B cell (primary cell): ENCODE measurements at regions of chr22 and their contacts with region 1.

Region 1: DNA sequence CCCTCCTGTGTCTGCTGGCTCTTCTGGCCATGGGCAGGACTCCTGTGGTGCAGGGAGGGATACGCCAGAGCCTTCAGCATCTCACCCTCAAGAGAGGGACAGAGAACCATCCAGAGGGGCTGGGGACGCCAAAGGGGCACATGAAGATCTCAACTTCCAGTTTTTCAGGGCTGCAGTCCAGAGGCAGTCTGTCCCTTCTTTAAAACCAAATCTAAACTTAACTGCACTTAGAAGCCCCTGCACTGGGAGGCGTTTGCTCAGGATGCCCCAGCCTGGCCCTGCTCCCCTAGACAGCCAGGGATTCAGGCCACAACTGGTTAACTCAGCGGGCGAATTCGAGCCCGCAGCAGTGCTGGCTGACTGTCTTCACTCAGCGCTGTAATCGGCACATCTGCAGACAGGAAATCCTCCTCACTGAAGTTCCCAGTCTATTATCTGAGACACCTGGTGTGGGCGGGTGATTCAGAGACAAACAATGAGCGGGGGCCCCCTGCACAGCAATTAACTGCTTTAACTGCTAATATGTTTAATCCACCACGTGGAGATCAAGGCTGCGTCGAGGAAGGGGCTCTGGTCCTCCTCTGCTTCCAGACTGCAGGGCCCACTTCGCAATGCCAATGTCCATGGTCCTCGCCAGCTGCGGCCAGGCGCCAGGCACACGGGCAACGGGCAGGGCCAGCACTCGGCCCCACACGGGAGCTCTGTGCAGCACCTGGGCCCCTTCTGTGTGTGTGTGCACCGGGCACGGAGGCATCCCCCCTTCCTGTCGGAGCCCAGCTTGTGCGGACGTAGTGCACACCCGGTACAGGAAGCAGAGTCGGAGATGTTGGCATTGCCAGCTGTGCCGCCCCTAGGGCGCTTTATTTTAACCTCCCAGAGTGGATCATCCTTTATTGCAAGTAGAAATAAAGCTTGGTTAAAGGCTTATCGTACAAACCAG is 36.9 kb upstream of the GNB1L start:
- DNase-seq: peak; percentile 58
- ATAC-seq: peak; percentile 74
- H3K4me3 ChIP-seq: peak overlapping the region in 4 of 5 experiments; percentile 33 to 58 (median 40)
- H3K4me3 Mint-ChIP-seq: peak overlapping the region; percentile 82
- H3K27ac ChIP-seq: peak overlapping the region; percentile 28 to 35
- H3K27ac Mint-ChIP-seq: peak overlapping the region; percentile 87
- H3K4me1 ChIP-seq: peaks cover 27 to 30% of the 10 kb centered on the region in 2 donors
- H3K4me1 Mint-ChIP-seq: peaks cover 28% of the 10 kb centered on the region
- H3K27me3 ChIP-seq: no peaks in the 10 kb centered on the region
- H3K27me3 Mint-ChIP-seq: no peaks in the 10 kb centered on the region
- CTCF ChIP-seq: no peak

Region 2: GRCh38 chr22:19832476-19833108 is 59.0 kb before region 1 on chr22:
- CTCF ChIA-PET with region 1: no interaction called
- POLR2A ChIA-PET with region 1: no interaction called
- intact Hi-C with region 1: loop called (anchors 10 kb)
- DNase-seq: no peak
- ATAC-seq: peak; percentile 33
- H3K4me3 ChIP-seq: no peak overlapping the region
- H3K4me3 Mint-ChIP-seq: no peak overlapping the region
- H3K27ac ChIP-seq: no peak overlapping the region
- H3K27ac Mint-ChIP-seq: no peak overlapping the region
- H3K4me1 ChIP-seq: peaks cover 0 to 5% of the 10 kb centered on the region in 2 donors
- H3K4me1 Mint-ChIP-seq: peaks cover 10% of the 10 kb centered on the region
- H3K27me3 ChIP-seq: no peaks in the 10 kb centered on the region
- H3K27me3 Mint-ChIP-seq: no peaks in the 10 kb centered on the region
- CTCF ChIP-seq: no peak

Region 3: DNA sequence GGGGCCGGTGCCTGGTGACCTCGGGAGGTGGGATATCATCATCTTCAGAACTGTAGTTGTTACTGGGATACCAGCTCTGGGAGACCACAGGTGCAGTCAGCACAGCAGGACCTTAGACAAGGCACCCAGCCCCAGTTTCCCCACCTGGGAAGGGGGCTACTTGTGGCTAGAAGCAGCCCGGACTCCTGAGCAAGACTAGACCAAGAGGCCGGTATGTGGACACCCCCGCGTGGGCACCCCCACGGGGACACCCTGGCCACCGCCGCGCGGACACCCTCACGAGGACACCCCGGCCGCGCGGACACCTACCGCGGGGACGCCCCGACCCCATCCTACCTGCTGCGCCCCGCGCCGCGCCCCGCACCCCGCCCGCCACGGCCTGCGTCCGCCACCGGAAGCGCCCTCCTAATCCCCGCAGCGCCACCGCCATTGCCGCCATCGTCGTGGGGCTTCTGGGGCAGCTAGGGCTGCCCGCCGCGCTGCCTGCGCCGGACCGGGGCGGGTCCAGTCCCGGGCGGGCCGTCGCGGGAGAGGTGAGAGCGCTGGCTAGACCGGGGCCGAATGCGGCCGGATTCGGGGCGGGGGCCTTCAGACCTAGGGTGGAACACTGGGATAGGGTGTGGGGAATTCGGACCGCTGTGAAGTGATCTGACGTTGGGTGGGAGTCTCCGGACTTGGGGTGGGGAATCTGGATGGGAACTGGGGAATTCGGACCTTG is 49.9 kb after region 1 on chr22 and contains the starts of genes COMT and TXNRD2:
- CTCF ChIA-PET with region 1: no interaction called
- POLR2A ChIA-PET with region 1: no interaction called
- intact Hi-C with region 1: loop called (anchors 5 kb)
- DNase-seq: peak; percentile 72
- ATAC-seq: peak; percentile 92
- H3K4me3 ChIP-seq: peak within 1 kb of the TSS; percentile 76 to 99 (median 83)
- H3K4me3 Mint-ChIP-seq: peak within 1 kb of the TSS; percentile 94
- H3K27ac ChIP-seq: peak within 1 kb of the TSS; percentile 62 to 85
- H3K27ac Mint-ChIP-seq: peak within 1 kb of the TSS; percentile 91
- H3K4me1 ChIP-seq: peaks cover 24 to 34% of the 10 kb centered on the region in 2 donors
- H3K4me1 Mint-ChIP-seq: peaks cover 40% of the 10 kb centered on the region
- H3K27me3 ChIP-seq: no peaks in the 10 kb centered on the region
- H3K27me3 Mint-ChIP-seq: no peaks in the 10 kb centered on the region
- CTCF ChIP-seq: no peak
- total RNA-seq, gene COMT: 32.6 and 36.1 TPM in 2 replicates
- total RNA-seq, gene TXNRD2: 36.2 and 39.0 TPM in 2 replicates